Gastrocnemius medialis (tissue), 4 donors: ENCODE measurements at regions of chr3 and their contacts with region 1.

Region 1: DNA sequence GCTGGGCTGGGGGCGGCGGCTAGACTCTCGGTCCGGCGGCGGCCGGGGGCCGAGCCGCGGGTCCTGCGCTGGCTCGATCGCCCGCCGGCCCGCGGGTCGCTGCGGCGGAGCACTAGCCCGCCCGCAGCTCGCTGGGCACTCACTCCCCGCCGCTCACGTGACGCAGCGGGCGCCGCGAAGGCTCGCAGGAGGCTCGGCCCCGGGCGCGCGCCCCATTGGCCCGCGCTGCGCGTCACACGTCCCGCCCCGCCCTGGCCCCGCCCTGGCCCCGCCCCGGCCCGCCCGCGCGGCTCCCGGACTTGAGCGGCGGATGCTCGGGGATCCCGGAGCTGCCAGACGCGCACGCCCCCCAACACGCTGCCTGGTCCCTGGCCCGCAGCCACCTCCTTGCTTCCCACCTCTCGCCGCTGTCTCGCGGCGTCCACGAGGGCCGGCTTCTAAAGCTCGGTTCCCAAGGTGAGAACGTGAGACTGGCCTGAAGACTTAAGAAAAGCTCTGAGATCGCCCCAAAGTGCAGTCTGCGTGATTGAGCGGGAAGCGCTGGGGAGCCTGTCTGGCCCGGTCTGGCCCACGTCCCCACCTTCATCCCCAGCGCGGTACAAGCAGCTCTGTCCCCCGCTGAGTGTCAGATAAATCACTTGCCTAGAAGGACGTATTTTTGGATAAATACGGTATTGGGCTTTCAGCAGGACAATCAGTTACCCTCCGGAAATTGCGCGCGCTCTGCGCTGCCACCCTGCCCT is at the start of gene KLF15:
- DNase-seq: peak; percentile 81 to 92
- ATAC-seq: peak; percentile 37 to 48
- H3K4me3 ChIP-seq: peak within 1 kb of the TSS; percentile 82 to 98 (median 89)
- H3K27ac ChIP-seq: peak within 1 kb of the TSS; percentile 91 to 99 (median 98)
- H3K4me1 ChIP-seq: peaks cover 35 to 48% of the 10 kb centered on the region in 2 donors
- H3K27me3 ChIP-seq: no peaks in the 10 kb centered on the region
- CTCF ChIP-seq: peak in 1 of 5 experiments; percentile 8
- POLR2A ChIP-seq: peak; percentile 98 to 100
- total RNA-seq, gene KLF15: 75.1 to 157 (median 106) TPM

Region 2: GRCh38 chr3:125622381-125622788 is 735.1 kb before region 1 on chr3:
- in situ Hi-C with region 1: no loop called
- intact Hi-C with region 1: loop called (anchors 2 kb)
- DNase-seq: peak; percentile 96 to 97
- ATAC-seq: peak; percentile 90 to 93
- H3K4me3 ChIP-seq: no peak overlapping the region
- H3K27ac ChIP-seq: peak overlapping the region; percentile 98 to 99 (median 98)
- H3K4me1 ChIP-seq: peaks cover 29 to 44% of the 10 kb centered on the region in 2 donors
- H3K27me3 ChIP-seq: no peaks in the 10 kb centered on the region
- CTCF ChIP-seq: no peak
- POLR2A ChIP-seq: peak; percentile 55 to 72

Region 3: GRCh38 chr3:126083913-126084767 is 273.3 kb before region 1 on chr3 and contains the start of gene SLC41A3:
- in situ Hi-C with region 1: no loop called
- intact Hi-C with region 1: loop called (anchors 5 kb)
- DNase-seq: peak; percentile 78 to 85
- ATAC-seq: peak; percentile 61 to 65
- H3K4me3 ChIP-seq: peak within 1 kb of the TSS; percentile 61 to 86 (median 82)
- H3K27ac ChIP-seq: peak within 1 kb of the TSS; percentile 94 to 97 (median 96)
- H3K4me1 ChIP-seq: peaks cover 18 to 22% of the 10 kb centered on the region in 2 donors
- H3K27me3 ChIP-seq: no peaks in the 10 kb centered on the region
- CTCF ChIP-seq: peak; percentile 41 to 50 (median 46)
- POLR2A ChIP-seq: peak; percentile 78 to 81
- total RNA-seq, gene SLC41A3: 43.1 to 76.2 (median 56.7) TPM

Region 4: DNA sequence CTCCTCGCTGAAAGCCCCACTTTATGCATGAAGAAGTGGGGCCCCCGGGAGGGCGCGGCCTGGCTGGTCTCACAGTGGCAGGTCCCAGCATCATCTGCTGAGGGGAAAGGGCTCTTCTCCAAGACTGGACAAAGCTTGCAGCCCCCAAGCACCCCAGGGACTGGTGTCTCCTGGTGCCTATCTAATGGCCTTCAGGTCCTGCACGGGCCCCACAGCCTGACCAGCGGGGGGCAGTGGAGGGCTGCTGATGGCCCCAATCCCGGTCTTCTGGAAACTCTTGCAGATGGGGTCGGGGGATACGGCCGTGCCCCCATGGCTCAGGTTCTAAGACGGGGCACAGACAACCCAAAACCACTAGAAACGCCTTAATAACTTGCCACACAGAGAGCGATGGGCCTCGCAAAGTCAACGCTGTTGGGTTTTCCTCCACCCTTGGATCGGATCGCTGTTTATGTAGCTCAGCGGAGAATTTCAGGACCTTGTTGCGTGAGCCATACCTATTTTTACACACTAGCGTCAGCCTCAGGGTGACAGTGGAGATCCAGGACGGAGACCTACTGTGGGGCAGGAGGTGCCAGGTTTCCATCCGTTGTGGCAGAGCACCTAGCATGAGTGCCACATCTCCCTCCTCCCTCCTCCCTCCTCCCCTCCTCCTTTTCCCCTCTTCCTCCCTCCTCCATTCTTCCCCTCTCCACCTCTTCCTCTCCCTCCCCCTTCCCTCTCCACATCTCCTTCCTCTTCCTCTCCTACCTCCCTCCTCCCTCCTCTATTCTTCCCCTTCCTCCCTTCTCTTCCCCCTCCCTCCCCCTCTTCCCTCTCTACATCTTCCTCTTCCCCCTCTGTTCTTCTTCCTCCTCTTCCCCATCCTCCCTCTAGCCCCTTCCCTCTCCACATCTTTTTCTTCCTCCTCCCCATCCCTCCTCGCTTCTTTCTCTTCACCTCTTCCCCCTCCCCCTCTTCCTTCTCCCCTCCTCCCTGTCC is 97.8 kb before region 1 on chr3:
- in situ Hi-C with region 1: no loop called
- intact Hi-C with region 1: loop called (anchors 1 kb)
- DNase-seq: peak; percentile 88 to 93
- ATAC-seq: peak; percentile 94 to 95
- H3K4me3 ChIP-seq: peak overlapping the region; percentile 26 to 44 (median 36)
- H3K27ac ChIP-seq: peak overlapping the region; percentile 80 to 92 (median 89)
- H3K4me1 ChIP-seq: peaks cover 25 to 30% of the 10 kb centered on the region in 2 donors
- H3K27me3 ChIP-seq: no peaks in the 10 kb centered on the region
- CTCF ChIP-seq: peak; percentile 81 to 97 (median 94)
- POLR2A ChIP-seq: peak; percentile 51 to 63

Region 5: DNA sequence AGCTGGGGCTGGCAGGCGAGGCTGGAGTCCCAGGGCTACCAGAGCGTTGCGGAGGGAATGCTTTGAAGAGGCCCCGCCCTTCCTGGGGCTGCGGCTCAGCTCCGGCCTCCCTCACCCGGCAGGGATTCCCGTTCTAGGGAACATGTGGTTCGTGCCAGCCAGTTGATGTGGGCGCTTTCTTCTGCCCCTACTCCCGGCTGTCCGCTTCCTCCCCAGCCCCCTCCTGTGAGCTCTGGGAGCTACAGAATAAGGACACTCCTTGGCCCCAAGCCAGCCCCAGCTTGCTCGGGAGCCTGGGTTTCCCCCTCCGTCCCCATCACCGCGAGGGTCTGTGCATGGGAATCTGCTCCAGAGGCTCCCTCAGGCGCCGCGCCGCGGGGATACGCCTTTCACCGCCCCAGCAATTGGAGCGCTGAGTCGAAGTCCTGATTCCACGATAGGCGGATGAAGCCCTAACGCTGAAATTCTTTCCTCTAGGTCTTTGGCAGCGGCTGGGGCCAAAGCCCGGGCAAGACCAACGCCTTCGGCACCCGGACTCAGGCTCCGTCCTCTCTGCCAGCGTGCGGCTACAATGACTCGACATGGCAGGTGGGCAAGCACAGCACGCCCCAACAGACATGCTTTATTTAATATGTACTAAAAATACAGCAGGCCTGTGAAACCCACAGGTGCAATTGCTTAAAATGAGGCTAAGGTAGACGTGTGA is 69.8 kb before region 1 on chr3:
- in situ Hi-C with region 1: no loop called
- intact Hi-C with region 1: loop called (anchors 2 kb)
- DNase-seq: peak; percentile 67 to 79
- ATAC-seq: peak; percentile 80 to 81
- H3K4me3 ChIP-seq: peak overlapping the region; percentile 55 to 65 (median 58)
- H3K27ac ChIP-seq: peak overlapping the region; percentile 85 to 93 (median 90)
- H3K4me1 ChIP-seq: peaks cover 18 to 19% of the 10 kb centered on the region in 2 donors
- H3K27me3 ChIP-seq: no peaks in the 10 kb centered on the region
- CTCF ChIP-seq: no peak
- POLR2A ChIP-seq: peak; percentile 38 to 41

Region 6: GRCh38 chr3:126398423-126399350 is 41.2 kb after region 1 on chr3:
- in situ Hi-C with region 1: no loop called
- intact Hi-C with region 1: no loop called
- DNase-seq: no peak
- ATAC-seq: no peak
- H3K4me3 ChIP-seq: no peak overlapping the region
- H3K27ac ChIP-seq: no peak overlapping the region
- H3K4me1 ChIP-seq: peaks cover 3 to 5% of the 10 kb centered on the region in 2 donors
- H3K27me3 ChIP-seq: peaks cover 0 to 7% (median 3%) of the 10 kb centered on the region in 3 donors
- CTCF ChIP-seq: no peak
- POLR2A ChIP-seq: no peak